Dorsolateral prefrontal cortex (tissue), 120 donors: ENCODE measurements at regions of chr16 and their contacts with region 1.

Region 1: GRCh38 chr16:75971334-75971733 is 245.0 kb upstream of the CPHXL start:
- DNase-seq: no peak
- H3K4me3 ChIP-seq: no peak overlapping the region
- H3K27ac ChIP-seq: peak overlapping the region in 7 of 59 donors; percentile 6 to 48 (median 26)
- H3K27me3 ChIP-seq: no peaks in the 10 kb centered on the region
- CTCF ChIP-seq: no peak

Region 2: DNA sequence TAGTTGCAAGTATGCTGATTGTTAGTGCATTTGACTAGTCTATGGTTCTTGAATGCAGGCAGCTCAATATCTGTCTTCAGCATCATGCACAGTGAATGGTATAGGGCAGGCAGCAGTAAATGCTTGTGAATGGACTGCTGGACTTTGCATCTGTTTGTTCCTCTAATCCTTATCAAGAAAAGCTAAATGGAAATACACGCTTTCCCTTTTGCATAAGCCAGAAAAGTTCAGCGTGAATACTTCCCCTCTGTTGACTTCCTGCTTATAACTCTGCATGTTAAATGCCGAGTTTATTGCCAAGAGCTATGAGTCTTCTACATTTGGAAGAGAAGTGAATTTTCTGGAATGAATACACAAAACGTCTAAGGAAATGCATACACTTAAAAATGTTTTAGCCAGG is 117.2 kb before region 1 on chr16:
- intact Hi-C with region 1: loop called in 1 of 2 experiments (anchors 10 kb)
- DNase-seq: no peak
- H3K4me3 ChIP-seq: no peak overlapping the region
- H3K27ac ChIP-seq: peak overlapping the region in 5 of 59 donors; percentile 7 to 45 (median 11)
- H3K27me3 ChIP-seq: no peaks in the 10 kb centered on the region
- CTCF ChIP-seq: no peak

Region 3: GRCh38 chr16:75899163-75899562 is 72.2 kb before region 1 on chr16:
- intact Hi-C with region 1: no loop called
- DNase-seq: no peak
- H3K4me3 ChIP-seq: no peak overlapping the region
- H3K27ac ChIP-seq: no peak overlapping the region
- H3K27me3 ChIP-seq: no peaks in the 10 kb centered on the region
- CTCF ChIP-seq: no peak